Cardiac septum (tissue), 1 donor: ENCODE measurements at regions of chr22 and their contacts with region 1.

Region 1: DNA sequence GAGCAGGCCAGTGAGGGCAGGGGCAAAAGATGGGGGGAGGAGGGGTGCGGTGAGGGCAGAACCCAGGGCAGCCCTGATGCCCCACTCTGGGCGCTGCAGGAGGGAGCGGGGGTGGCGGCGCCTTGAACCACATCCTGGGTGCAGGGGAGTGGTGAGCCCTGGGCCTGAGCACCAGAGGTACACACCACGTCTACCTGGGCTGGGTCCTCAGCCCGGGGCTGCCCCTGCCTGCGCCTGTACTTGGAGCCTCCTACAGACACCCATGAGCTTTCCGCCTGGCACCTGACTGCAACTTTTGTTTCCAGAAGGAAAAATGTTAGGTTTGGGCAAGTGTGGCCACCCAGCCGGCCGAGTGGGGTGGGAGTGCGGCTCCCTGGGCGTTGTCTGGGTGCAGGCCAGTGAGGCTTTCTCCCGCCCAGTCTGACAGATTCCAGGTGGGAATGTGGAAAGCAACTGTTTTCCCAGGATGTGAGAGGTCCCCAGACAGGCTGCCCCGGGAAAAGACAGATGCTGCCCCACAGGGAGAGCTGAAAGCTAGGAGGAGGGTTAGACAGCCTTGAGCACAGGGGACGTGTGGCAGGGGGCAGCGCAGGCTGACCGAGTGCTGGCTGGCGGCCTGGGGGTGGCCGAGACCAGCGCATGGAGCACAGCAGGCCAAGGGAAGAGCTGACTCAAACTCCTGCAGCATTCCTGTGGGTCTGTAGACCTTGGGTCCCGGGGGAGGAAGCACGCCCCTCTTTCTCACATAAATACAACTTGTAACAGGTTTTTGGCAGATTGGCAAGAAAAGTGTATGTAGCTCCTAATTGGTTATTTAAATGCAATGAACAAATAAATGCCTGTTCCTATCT is 44.1 kb downstream of the GNB1L start:
- DNase-seq: peak; percentile 51

Region 2: GRCh38 chr22:19666663-19667593 is 143.6 kb before region 1 on chr22:
- intact Hi-C with region 1: no loop called
- DNase-seq: no peak

Region 3: DNA sequence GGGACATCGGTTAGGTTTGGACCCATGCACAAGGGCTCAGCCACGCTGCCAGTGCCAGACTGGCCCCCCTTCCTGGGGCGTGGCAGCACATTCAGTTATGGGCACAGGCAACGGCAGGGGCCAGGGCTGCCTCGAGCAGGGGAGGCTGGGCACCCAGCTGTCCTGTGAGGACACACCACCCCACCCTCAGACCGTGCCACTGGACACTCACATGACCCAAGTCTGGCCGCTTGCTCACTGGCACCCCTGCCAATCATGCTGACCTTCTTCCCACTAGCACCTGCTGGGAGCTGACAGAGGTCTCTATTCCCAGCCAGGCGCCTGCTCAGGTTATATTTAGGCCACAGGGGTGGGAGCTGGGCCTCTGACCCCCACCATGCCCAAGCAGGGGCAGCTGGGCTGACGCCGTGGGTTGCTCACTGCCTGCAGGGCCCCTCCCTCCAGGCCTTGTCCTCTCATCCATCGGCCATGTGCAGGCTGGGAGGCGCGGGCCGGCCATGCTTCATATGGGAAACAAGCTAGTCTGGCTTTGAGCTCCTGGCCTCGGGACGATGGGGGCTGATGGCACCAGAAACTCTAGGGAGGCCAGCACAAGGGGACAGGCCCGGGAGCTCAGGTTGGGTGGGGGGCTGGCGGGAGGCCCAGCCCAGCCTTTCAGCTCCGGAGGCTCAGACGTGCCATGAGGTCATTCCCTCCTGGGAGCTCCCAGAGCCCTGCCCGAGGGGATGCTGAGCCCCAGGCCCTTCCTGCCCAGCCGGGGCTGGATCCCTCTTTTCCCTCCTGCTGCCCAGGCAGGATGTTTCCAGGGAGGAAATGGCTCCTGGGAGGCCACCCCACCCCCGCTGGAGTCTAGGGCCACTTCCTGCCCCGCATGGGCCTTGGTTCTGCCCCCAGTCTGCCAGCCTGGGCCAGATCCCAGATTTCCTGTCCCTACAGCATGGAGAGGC is 65.1 kb before region 1 on chr22:
- intact Hi-C with region 1: loop called (anchors 5 kb)
- DNase-seq: peak; percentile 80

Region 4: DNA sequence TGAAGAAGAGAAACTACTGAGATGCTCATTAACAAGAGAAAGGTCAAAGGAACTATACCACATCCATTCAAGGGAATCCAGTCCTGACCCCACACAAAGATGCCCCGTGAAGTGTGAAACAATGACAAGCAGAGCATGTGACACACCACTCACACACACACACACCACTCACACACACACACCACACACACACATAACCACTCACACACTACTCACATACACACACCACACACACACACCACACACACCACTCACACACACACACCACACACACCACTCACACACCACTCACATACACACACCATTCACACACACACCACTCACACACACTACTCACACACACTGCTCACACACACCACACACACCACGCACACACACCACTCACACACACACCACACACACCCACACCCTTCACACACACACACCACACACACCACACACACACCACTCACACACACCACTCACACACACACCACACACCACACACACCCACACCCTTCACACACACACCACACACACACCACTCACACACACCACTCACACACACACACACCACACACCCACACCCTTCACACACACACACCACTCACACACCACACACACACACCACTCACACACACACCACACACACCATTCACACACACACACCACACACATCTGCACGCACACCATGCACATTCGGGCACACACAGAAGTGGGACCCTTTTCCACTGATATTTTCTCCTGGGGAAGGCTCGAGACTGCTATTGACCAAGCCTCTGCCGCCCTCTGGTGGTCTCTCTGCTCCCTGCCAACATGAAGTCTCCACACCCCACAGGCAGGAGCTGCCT is 99.0 kb after region 1 on chr22:
- intact Hi-C with region 1: loop called (anchors 10 kb)
- DNase-seq: peak; percentile 89